Activated T-helper 1 cell treated with anti-CD3 and anti-CD28 coated beads, Interleukin-12 subunit alpha, Interleukin-12 subunit beta, Interleukin-2, Interleukin-4 antibody, amounts not matched to agents 30 ng/mL and 10 ng/mL and 1 ng/mL, durations not matched to agents 14 hours and 24 hours and 36 hours (primary cell): ENCODE measurements at regions of chrX and their contacts with region 1.

Region 1: GRCh38 chrX:1453951-1454785 is 1.5 kb upstream of the ASMTL start:
- DNase-seq: peak; percentile 82
- H3K4me3 Mint-ChIP-seq: peak overlapping the region; percentile 68
- H3K27ac Mint-ChIP-seq: peak overlapping the region; percentile 36
- H3K4me1 Mint-ChIP-seq: peaks cover 13% of the 10 kb centered on the region
- H3K27me3 Mint-ChIP-seq: no peaks in the 10 kb centered on the region

Region 2: GRCh38 chrX:1246816-1247215 is 207.4 kb before region 1 on chrX:
- intact Hi-C with region 1: loop called (anchors 1 kb)
- DNase-seq: peak; percentile 77
- H3K4me3 Mint-ChIP-seq: peak overlapping the region; percentile 64
- H3K27ac Mint-ChIP-seq: peak overlapping the region; percentile 78
- H3K4me1 Mint-ChIP-seq: peaks cover 42% of the 10 kb centered on the region
- H3K27me3 Mint-ChIP-seq: peaks cover 4% of the 10 kb centered on the region

Region 3: GRCh38 chrX:1292575-1293290 is 161.4 kb before region 1 on chrX:
- intact Hi-C with region 1: no loop called
- DNase-seq: no peak
- H3K4me3 Mint-ChIP-seq: no peak overlapping the region
- H3K27ac Mint-ChIP-seq: no peak overlapping the region
- H3K4me1 Mint-ChIP-seq: peaks cover 9% of the 10 kb centered on the region
- H3K27me3 Mint-ChIP-seq: peaks cover 6% of the 10 kb centered on the region

Region 4: DNA sequence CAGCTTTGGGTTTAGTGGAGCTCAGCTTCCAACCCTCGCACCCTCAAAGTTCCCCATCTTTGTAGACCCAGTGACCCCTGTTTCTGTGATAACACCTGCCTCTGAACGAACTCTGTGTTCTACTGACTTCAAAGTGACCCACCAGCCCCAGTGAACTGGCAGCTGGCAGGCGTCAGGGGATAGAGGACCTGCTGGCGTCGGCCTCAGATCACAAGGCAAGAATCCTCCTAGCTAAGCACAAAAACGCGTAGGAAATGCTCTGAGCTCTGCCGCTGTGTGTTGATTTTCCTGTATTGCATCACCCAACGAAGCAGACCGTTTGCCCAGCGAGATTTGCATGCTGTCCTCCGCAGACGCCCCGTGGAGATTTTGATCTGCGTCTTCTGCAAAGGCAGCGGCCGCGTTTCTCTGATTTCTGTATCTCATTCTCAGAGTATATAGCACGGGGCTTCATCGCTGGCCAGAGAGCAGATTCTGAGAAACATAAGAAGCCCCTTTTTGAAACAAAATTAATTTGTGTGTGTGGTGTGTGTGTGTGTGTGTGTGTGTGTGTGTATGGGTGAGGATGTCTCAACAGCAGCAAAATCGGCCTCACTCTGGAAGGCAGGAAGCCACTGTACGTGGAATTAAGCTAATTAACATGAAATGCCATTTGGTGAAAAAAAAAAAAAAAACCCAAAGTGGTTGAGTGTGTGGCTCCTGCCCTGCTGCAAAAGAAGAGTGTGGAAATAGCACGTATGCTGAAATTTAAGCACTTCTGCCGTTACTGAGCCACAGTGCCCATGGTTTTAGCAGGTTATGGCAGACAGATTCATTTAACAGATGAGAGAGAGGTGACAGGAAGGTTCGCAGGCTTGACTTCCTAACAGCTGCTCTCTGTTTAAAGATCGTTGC is 27.7 kb after region 1 on chrX:
- intact Hi-C with region 1: no loop called
- DNase-seq: peak; percentile 78
- H3K4me3 Mint-ChIP-seq: peak overlapping the region; percentile 85
- H3K27ac Mint-ChIP-seq: peak overlapping the region; percentile 99
- H3K4me1 Mint-ChIP-seq: peaks cover 66% of the 10 kb centered on the region
- H3K27me3 Mint-ChIP-seq: no peaks in the 10 kb centered on the region

Region 5: GRCh38 chrX:1491851-1492349 is 37.7 kb after region 1 on chrX:
- intact Hi-C with region 1: loop called (anchors 5 kb)
- DNase-seq: peak; percentile 51
- H3K4me3 Mint-ChIP-seq: no peak overlapping the region
- H3K27ac Mint-ChIP-seq: peak overlapping the region; percentile 62
- H3K4me1 Mint-ChIP-seq: peaks cover 29% of the 10 kb centered on the region
- H3K27me3 Mint-ChIP-seq: no peaks in the 10 kb centered on the region

Region 6: DNA sequence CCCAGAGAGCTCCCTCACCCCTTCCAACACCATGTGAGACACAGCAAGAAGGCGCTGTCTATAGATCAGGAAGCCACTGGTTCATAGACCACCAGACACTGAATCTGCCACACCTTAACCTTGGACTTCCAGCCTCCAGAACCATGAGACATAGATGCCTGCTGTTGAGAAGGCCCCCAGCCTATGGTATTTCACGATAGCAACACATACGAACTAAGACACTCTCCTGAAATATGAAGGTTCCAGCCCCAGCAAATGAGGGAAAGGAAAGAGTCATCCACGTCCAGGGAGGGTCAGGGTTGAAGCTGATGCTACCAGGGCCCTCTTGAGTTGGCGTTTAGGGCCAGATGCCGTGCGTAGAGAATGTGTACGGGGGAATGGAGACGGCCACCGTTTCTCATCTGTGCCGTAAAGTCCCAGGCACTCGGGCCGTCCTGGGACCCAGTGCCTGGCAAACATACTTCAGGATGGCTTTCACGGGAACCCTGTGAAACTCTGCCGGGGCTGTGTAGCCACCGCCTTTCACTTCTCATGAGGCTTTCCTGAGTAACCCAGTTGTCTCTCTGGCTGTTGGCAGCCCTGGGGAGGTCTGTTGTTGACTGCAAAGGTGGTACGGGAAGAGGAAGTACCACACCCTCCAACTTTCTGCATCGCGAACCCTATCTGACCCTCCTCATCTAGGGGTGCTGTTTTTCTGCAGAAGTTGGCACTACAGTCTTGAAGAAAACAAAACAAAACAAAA is 100.5 kb after region 1 on chrX:
- intact Hi-C with region 1: no loop called
- DNase-seq: peak; percentile 42
- H3K4me3 Mint-ChIP-seq: peak overlapping the region; percentile 37
- H3K27ac Mint-ChIP-seq: peak overlapping the region; percentile 61
- H3K4me1 Mint-ChIP-seq: peaks cover 31% of the 10 kb centered on the region
- H3K27me3 Mint-ChIP-seq: peaks cover 2% of the 10 kb centered on the region

Region 7: GRCh38 chrX:1657367-1658070 is 203.4 kb after region 1 on chrX:
- intact Hi-C with region 1: loop called (anchors 1 kb)
- DNase-seq: peak; percentile 51
- H3K4me3 Mint-ChIP-seq: peak overlapping the region; percentile 98
- H3K27ac Mint-ChIP-seq: peak overlapping the region; percentile 99
- H3K4me1 Mint-ChIP-seq: peaks cover 36% of the 10 kb centered on the region
- H3K27me3 Mint-ChIP-seq: no peaks in the 10 kb centered on the region

Region 8: GRCh38 chrX:2608638-2609430 is 1154.7 kb after region 1 on chrX:
- intact Hi-C with region 1: loop called (anchors 1 kb)
- DNase-seq: peak; percentile 89
- H3K4me3 Mint-ChIP-seq: peak overlapping the region; percentile 91
- H3K27ac Mint-ChIP-seq: peak overlapping the region; percentile 89
- H3K4me1 Mint-ChIP-seq: peaks cover 47% of the 10 kb centered on the region
- H3K27me3 Mint-ChIP-seq: no peaks in the 10 kb centered on the region